CD4-positive, alpha-beta memory T cell (primary cell): ENCODE measurements at regions of chr9 and their contacts with region 1.

Region 1: DNA sequence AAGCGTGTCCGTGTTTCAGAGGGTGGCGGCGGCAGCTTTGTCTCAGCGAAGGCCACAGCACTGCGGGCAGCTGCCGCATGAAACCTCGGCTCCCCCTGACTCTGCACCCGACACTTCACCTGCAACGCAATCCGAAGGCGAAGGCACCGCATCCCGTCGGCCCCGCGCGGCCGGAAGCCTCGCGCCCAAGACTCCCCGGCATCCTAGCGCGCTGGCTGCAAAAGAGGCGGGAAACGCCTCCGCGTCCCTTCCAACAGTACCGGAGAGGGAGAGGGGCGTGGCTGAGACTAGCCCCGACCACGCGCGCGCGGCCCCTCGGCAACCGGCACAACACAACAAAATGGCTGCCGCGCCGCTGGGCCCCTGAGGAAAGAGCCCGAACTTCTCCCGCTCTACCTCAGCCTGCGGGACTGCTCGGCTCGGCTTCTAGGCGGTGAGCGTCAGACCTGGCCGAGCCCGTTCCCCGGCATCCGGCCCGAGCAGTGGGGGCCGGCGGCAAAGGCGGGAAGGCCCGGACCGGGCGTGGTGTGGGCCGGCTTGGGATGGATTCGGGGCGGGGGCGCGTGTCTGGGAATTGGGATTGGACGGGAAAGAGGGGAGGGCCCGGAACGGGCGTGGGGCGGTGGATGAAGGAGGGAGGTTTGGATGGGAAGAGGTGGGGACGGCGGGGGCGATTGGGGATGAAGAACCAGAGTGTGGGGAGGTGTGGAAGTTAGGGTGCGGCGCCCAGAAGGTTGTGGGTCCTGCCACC is at the start of gene CNTRL:
- DNase-seq: peak; percentile 81 to 92 (median 84)
- H3K4me3 ChIP-seq: peak within 1 kb of the TSS; percentile 72 to 87
- H3K4me3 Mint-ChIP-seq: peak within 1 kb of the TSS; percentile 82 to 100 (median 98)
- H3K27ac ChIP-seq: peak within 1 kb of the TSS; percentile 90
- H3K27ac Mint-ChIP-seq: peak within 1 kb of the TSS; percentile 78 to 99 (median 98)
- H3K4me1 ChIP-seq: peaks cover 37% of the 10 kb centered on the region
- H3K4me1 Mint-ChIP-seq: peaks cover 34 to 66% (median 53%) of the 10 kb centered on the region in 4 donors
- H3K27me3 ChIP-seq: no peaks in the 10 kb centered on the region
- H3K27me3 Mint-ChIP-seq: no peaks in the 10 kb centered on the region
- total RNA-seq, gene CNTRL: 119 to 122 TPM

Region 2: DNA sequence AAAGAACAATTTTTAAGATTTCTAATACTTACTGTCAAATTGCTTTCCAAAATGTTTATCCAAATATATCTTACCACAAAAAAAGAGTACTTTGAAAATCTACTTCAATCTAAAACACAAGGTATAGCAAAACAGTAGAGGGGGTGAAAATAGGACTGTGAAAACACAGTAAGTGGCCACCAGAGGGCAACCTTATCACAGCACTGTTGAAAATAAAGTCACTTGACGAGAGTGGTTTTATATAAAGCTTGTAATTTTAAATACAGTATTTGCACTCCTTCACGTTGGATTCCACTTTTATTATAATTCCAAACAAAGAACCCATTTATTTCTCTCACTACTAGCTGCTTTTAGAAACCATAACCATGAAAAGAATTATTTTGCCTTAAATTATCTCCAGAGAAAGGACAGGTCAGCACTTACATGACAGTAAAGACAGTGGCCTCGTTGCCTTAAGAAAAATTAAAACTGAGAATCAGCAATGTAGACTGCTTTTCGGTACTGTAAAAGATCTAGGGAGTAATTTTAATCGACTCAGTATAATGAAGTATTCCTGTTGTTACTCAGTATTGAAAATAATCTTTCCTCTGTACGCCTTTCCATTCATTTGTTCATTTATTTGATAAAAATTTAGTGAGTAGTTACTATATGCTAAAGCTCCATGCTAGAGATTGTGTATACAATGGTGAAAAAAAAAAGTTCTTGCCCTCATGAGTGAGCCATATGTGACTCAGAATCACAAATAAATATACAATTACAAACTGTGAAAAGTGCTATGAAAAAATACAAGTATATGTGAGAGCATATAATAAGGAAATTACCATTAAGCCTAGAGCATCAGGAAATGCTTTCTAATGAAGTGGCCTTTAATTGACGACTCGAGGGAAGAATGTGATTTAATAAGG is 454.8 kb before region 1 on chr9:
- CTCF ChIA-PET with region 1: interaction called, 4 read pairs
- POLR2A ChIA-PET with region 1: no interaction called
- intact Hi-C with region 1: loop called (anchors 1 kb)
- DNase-seq: peak; percentile 46 to 55 (median 50)
- H3K4me3 ChIP-seq: no peak overlapping the region
- H3K4me3 Mint-ChIP-seq: no peak overlapping the region
- H3K27ac ChIP-seq: no peak overlapping the region
- H3K27ac Mint-ChIP-seq: peak overlapping the region in 3 of 7 donors; percentile 4 to 72 (median 9)
- H3K4me1 ChIP-seq: no peaks in the 10 kb centered on the region
- H3K4me1 Mint-ChIP-seq: peaks cover 4 to 7% (median 6%) of the 10 kb centered on the region in 4 donors
- H3K27me3 ChIP-seq: no peaks in the 10 kb centered on the region
- H3K27me3 Mint-ChIP-seq: no peaks in the 10 kb centered on the region

Region 3: DNA sequence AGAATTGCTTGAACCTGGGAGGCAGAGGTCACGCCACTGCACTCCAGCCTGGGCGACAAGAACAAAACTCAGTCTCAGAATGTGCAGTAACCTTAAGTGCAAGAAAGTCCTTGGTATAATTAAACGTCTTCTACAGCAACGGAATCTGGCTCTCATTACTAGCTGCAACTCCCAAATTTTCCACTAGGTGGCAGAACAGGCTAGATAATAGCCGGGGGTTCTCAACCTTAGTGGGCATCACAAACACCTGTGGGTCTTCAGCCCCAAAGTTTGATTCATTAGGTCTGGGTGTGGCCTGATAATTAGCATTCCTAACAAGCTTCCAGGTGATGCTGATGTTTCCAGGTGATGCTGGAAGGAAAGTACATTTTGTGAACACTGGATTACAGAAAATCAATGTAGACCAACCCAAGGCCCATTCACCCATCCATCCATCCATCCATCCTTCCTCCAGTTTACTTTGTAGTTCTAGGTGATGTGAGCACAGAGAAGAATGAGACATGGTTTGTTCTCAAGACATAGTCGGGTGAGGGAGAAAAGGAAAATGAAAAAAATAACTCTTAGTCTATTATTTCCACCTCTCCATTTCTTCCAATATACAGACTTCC is 318.9 kb before region 1 on chr9:
- CTCF ChIA-PET with region 1: interaction called, 106 read pairs
- POLR2A ChIA-PET with region 1: no interaction called
- intact Hi-C with region 1: loop called (anchors 1 kb)
- DNase-seq: peak; percentile 58 to 75 (median 63)
- H3K4me3 ChIP-seq: no peak overlapping the region
- H3K4me3 Mint-ChIP-seq: no peak overlapping the region
- H3K27ac ChIP-seq: no peak overlapping the region
- H3K27ac Mint-ChIP-seq: peak overlapping the region in 6 of 7 donors; percentile 13 to 79 (median 49)
- H3K4me1 ChIP-seq: no peaks in the 10 kb centered on the region
- H3K4me1 Mint-ChIP-seq: peaks cover 0 to 6% (median 5%) of the 10 kb centered on the region in 4 donors
- H3K27me3 ChIP-seq: no peaks in the 10 kb centered on the region
- H3K27me3 Mint-ChIP-seq: no peaks in the 10 kb centered on the region

Region 4: GRCh38 chr9:120792898-120793765 is 281.7 kb before region 1 on chr9 and contains the start of gene FBXW2:
- CTCF ChIA-PET with region 1: interaction called, 4 read pairs
- POLR2A ChIA-PET with region 1: interaction called, 14 read pairs
- intact Hi-C with region 1: no loop called
- DNase-seq: peak; percentile 74 to 83 (median 78)
- H3K4me3 ChIP-seq: peak within 1 kb of the TSS; percentile 82 to 94
- H3K4me3 Mint-ChIP-seq: peak within 1 kb of the TSS; percentile 89 to 98 (median 92)
- H3K27ac ChIP-seq: peak within 1 kb of the TSS; percentile 77
- H3K27ac Mint-ChIP-seq: peak within 1 kb of the TSS; percentile 90 to 97 (median 93)
- H3K4me1 ChIP-seq: peaks cover 58% of the 10 kb centered on the region
- H3K4me1 Mint-ChIP-seq: peaks cover 39 to 62% (median 50%) of the 10 kb centered on the region in 4 donors
- H3K27me3 ChIP-seq: no peaks in the 10 kb centered on the region
- H3K27me3 Mint-ChIP-seq: no peaks in the 10 kb centered on the region
- total RNA-seq, gene FBXW2: 73.7 to 77.8 TPM

Region 5: GRCh38 chr9:120956862-120957261 is 117.9 kb before region 1 on chr9:
- CTCF ChIA-PET with region 1: no interaction called
- POLR2A ChIA-PET with region 1: no interaction called
- intact Hi-C with region 1: no loop called
- DNase-seq: no peak
- H3K4me3 ChIP-seq: no peak overlapping the region
- H3K4me3 Mint-ChIP-seq: no peak overlapping the region
- H3K27ac ChIP-seq: no peak overlapping the region
- H3K27ac Mint-ChIP-seq: no peak overlapping the region
- H3K4me1 ChIP-seq: no peaks in the 10 kb centered on the region
- H3K4me1 Mint-ChIP-seq: no peaks in the 10 kb centered on the region
- H3K27me3 ChIP-seq: no peaks in the 10 kb centered on the region
- H3K27me3 Mint-ChIP-seq: no peaks in the 10 kb centered on the region

Region 6: GRCh38 chr9:120985810-120986222 is 89.0 kb before region 1 on chr9:
- CTCF ChIA-PET with region 1: interaction called, 46 read pairs
- POLR2A ChIA-PET with region 1: no interaction called
- intact Hi-C with region 1: loop called (anchors 1 kb)
- DNase-seq: no peak
- H3K4me3 ChIP-seq: no peak overlapping the region
- H3K4me3 Mint-ChIP-seq: no peak overlapping the region
- H3K27ac ChIP-seq: no peak overlapping the region
- H3K27ac Mint-ChIP-seq: no peak overlapping the region
- H3K4me1 ChIP-seq: no peaks in the 10 kb centered on the region
- H3K4me1 Mint-ChIP-seq: peaks cover 0 to 5% (median 2%) of the 10 kb centered on the region in 4 donors
- H3K27me3 ChIP-seq: no peaks in the 10 kb centered on the region
- H3K27me3 Mint-ChIP-seq: peaks cover 0 to 2% of the 10 kb centered on the region in 2 donors

Region 7: DNA sequence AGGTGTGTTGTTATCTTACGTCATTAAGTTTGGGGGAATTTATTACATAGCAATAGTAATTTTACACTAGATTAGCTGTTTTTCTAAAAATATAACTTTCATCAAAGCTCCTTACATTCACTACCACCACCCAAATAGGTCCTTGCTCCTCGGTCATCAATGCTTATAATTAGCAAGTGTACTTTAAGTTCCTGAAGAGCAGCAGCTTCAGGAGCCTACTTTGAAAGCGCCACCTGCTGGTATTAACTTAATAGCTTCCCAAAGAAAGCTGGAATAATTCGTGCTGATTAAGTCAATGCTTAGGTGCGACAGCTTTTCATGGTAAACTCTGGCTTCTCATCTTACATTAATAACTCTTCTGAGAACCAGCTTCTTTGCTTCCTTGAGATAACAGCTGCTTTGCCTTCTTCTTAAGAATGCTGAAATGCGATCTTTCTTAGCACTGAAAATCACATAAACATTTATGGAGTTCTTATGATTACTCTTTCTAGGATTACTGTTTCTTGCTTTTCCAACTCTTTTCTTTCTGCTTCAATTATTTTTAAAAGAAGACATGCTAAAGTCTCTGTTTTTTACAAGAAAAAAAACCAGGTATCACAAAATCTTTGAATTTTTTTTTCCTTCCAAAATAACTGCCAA is 14.7 kb before region 1 on chr9:
- CTCF ChIA-PET with region 1: interaction called, 63 read pairs
- POLR2A ChIA-PET with region 1: interaction called, 8 read pairs
- intact Hi-C with region 1: no loop called
- DNase-seq: peak in 4 of 5 donors; percentile 48 to 57 (median 50)
- H3K4me3 ChIP-seq: no peak overlapping the region
- H3K4me3 Mint-ChIP-seq: no peak overlapping the region
- H3K27ac ChIP-seq: no peak overlapping the region
- H3K27ac Mint-ChIP-seq: peak overlapping the region in 1 of 7 donors; percentile 20
- H3K4me1 ChIP-seq: peaks cover 27% of the 10 kb centered on the region
- H3K4me1 Mint-ChIP-seq: peaks cover 16 to 18% (median 17%) of the 10 kb centered on the region in 4 donors
- H3K27me3 ChIP-seq: no peaks in the 10 kb centered on the region
- H3K27me3 Mint-ChIP-seq: no peaks in the 10 kb centered on the region

Region 8: GRCh38 chr9:121141706-121142105 is 66.9 kb after region 1 on chr9:
- CTCF ChIA-PET with region 1: no interaction called
- POLR2A ChIA-PET with region 1: no interaction called
- intact Hi-C with region 1: no loop called
- DNase-seq: no peak
- H3K4me3 ChIP-seq: no peak overlapping the region
- H3K4me3 Mint-ChIP-seq: no peak overlapping the region
- H3K27ac ChIP-seq: no peak overlapping the region
- H3K27ac Mint-ChIP-seq: peak overlapping the region in 3 of 7 donors; percentile 2 to 55 (median 24)
- H3K4me1 ChIP-seq: peaks cover 5% of the 10 kb centered on the region
- H3K4me1 Mint-ChIP-seq: peaks cover 9 to 15% (median 11%) of the 10 kb centered on the region in 4 donors
- H3K27me3 ChIP-seq: no peaks in the 10 kb centered on the region
- H3K27me3 Mint-ChIP-seq: no peaks in the 10 kb centered on the region